GM18951 (cell line): ENCODE measurements at regions of chr15 and their contacts with region 1.

Region 1: DNA sequence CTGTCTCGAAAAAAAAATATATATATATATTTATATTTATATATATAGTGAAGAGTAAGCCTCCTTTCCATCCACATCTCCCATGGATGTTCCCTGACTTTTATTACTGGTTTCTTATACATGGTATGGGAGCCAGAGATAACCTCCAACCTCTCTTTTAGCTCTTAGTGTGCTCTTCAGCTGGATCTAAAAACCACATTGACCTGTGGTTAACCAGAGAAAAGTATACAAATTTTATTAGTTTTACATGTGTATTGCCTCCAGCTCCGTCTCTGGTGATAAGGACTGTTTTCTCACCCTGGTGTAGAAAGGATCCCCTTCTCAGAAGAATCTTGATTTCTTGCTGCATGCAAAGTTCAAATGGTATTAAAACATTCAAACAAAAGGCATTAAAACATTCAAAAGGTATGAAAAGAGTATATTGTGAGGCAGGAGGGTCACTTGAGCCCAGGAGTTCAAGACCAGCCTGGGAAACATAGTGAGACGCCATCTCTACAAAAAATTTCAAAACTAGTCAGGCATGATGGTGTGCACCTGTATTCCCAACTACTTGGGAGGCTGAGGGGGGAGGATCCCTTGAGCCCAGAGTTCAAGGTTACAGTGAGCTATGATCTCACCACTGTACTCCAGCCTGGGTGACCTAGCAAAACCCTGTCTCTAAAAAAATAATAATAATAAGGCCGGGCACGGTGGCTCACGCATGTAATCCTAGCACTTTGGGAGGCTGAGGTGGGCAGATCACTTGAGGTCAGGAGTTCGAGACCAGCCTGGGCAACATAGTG is 13.5 kb upstream of the TTBK2 start:
- POLR2A ChIP-seq: no peak

Region 2: GRCh38 chr15:42558739-42559138 is 375.3 kb before region 1 on chr15:
- in situ Hi-C with region 1: no loop called
- POLR2A ChIP-seq: no peak

Region 3: DNA sequence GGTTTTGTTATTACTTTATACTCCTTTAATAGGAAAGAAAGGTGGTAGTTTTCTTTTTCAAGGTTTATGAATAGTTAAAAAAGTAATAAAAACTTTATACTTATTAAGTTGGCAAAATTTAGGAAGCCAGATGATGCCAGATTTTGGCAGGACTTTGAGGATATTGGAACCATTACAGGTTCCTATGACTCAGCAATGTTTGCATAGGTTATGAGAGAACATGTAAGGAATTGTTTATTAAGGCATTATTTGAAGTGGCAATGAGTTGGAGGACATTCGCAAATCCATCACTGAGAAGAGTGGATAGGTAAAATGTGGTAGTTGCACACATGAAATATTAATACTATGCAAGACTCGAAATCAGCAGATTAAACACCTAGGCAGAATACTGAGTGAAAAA is 227.0 kb before region 1 on chr15:
- in situ Hi-C with region 1: loop called (anchors 5 kb)
- POLR2A ChIP-seq: no peak

Region 4: DNA sequence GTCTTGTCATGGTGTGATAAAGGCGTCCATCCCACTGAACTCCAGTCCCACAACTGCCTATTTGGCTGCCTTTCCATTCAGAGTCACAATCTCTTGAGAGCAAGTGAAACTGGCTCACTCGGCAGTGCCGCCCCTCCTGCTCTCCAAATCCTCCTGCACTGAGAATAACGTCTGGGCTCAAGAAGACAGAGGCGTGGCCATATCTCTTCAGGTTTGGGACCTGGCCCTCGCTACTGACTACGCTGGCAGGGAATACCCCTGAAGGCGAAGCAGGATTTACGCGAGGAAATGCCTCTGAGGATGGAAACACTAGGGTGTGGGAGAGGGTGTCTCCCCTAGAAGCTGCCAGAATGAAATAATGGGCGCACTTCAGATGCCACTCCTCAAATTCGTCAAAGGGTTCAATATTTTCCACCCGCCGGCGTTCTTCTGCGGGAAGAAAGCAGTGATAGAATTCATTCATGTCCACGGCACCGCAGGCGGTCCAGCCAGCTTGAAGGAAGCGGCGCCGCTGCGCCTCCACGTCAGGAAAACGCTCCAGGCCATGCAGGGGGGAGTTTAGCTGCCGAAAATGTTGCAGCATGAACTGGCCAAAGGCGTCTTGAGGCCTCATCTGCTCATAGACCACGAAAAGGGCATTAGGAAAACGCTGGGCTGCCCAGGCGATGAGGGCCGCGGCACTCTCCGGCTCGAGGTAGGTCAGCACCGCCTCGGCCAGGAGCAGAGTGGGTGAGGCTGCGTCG is 395.3 kb after region 1 on chr15:
- in situ Hi-C with region 1: no loop called
- POLR2A ChIP-seq: no peak